Posterior vena cava (tissue), 2 donors: ENCODE measurements at regions of chr18 and their contacts with region 1.

Region 1: DNA sequence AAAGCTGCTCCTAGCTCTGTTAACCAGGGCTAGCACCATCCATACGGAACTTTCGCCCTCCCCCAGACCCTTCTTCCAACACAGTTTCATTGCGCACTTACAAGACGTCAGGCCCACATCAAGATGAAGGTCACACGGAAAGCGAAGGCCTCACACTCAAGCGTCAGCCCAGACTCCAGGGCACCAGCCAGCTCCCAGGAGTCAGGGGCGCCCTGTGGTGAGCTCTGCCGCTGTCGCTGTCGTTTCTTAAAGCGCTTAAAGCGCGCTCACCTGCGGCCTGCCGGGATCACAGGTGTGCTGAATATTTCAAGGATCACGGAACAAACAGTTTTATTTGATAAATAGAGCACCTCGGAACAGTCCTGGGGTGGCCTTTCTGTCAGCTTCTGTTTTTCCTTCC is 163.1 kb downstream of the CDH20 start:
- DNase-seq: no peak

Region 2: DNA sequence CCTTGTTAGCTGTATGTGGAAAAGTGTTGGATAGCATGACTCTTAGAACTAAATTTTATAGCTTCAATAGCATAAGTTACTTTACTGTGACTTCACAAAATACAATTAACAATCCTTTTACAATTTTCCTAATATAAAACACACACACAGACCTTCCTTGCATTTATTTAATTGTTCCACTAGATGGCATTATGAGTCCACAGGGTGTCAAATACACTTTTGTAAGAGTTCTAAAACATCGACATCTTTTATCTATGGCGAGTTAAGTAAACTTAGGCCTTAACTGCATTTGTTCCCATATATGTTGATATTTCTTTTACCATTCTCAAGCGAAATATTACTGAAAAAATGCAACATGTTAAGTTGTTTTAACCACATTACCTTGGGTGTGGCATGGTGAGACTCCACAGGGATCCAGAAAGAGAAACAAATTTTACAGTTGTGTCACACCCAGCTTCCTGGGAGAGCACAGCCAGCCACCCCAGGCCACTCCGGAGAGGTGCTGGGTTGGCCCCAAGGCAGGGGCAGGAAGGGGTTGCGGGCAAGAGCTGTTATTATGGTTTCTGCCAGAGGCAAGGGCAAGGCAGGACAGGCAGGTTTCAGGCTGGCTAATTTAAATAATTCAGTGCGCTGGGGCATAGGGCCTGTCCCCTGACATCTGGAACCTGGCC is 811.4 kb before region 1 on chr18:
- intact Hi-C with region 1: loop called (anchors 5 to 10 kb)
- DNase-seq: no peak

Region 3: GRCh38 chr18:60794802-60795201 is 701.6 kb before region 1 on chr18:
- intact Hi-C with region 1: loop called in 1 of 2 experiments (anchors 10 kb)
- DNase-seq: no peak